ENCODE measurements at regions of chr16 and their contacts with region 1.

Region 1: GRCh38 chr16:53469936-53470335 is 33.1 kb downstream of the AKTIP start:
- DNase-seq: no peak
- ATAC-seq: no peak

Region 2: DNA sequence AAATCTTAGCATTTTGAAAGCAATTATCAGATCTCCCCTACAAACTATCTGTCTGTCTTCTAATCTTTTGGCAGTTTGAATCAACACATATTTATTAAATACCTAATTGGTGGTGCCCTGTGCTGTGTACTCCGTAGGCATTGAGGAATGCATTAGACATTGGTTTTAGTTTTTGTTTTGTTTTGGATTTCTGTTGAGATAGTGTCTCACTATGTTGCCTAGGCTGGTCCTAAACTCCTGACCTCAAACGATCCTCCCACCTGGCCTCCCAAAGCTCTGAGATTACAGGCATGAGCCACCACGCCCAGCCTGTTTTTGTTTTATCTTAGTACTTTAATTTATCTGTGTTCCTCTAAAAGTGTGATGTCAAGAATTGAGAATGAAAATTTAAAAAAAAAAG is 160.5 kb before region 1 on chr16:
- intact Hi-C with region 1: loop called (anchors 10 kb)
- DNase-seq: no peak
- ATAC-seq: no peak

Region 3: DNA sequence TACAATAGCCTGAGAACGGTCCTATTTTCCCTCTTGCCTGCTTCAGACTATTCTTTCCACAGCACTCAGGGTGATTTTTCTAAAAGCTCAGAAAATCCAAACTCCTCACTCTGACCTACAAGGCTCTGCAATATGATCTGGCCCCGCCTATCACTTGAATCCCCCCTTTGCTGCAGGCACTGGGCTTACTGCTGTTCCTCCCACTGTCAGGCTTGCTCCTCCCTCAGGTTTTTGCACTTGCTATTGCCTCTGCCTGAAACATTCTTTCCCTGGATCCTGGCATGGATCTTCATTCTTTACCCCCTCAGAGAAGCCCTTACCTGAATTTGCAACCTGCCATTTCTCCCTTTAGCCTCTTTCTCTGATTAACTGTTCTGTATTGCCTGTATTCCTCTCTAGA is 181.4 kb after region 1 on chr16:
- intact Hi-C with region 1: no loop called
- DNase-seq: no peak
- ATAC-seq: no peak

Measured in Right ventricle myocardium superior (tissue), 1 donor.